Activated T-helper 2 cell treated with anti-CD3 and anti-CD28 coated beads, Interferon-gamma antibody, Interleukin-2, Interleukin-4, amounts not matched to agents 10 μg/mL and 5 μg/mL and 100 μg/mL, durations not matched to agents 14 hours and 24 hours and 36 hours (primary cell): ENCODE measurements at regions of chr14 and their contacts with region 1.

Region 1: GRCh38 chr14:67695394-67695949 is at the start of gene RDH11:
- DNase-seq: peak; percentile 81
- H3K4me3 Mint-ChIP-seq: peak within 1 kb of the TSS; percentile 95
- H3K27ac Mint-ChIP-seq: peak within 1 kb of the TSS; percentile 97
- H3K4me1 Mint-ChIP-seq: peaks cover 35% of the 10 kb centered on the region
- H3K27me3 Mint-ChIP-seq: no peaks in the 10 kb centered on the region
- total RNA-seq, gene RDH11: 78.4 and 82.9 TPM in 2 replicates

Region 2: GRCh38 chr14:67331368-67332125 is 363.9 kb before region 1 on chr14:
- intact Hi-C with region 1: no loop called
- DNase-seq: no peak
- H3K4me3 Mint-ChIP-seq: no peak overlapping the region
- H3K27ac Mint-ChIP-seq: no peak overlapping the region
- H3K4me1 Mint-ChIP-seq: no peaks in the 10 kb centered on the region
- H3K27me3 Mint-ChIP-seq: no peaks in the 10 kb centered on the region

Region 3: GRCh38 chr14:67619446-67620216 is 75.8 kb before region 1 on chr14 and contains the start of gene ARG2:
- intact Hi-C with region 1: loop called (anchors 2 kb)
- DNase-seq: peak; percentile 94
- H3K4me3 Mint-ChIP-seq: peak within 1 kb of the TSS; percentile 83
- H3K27ac Mint-ChIP-seq: peak within 1 kb of the TSS; percentile 79
- H3K4me1 Mint-ChIP-seq: peaks cover 38% of the 10 kb centered on the region
- H3K27me3 Mint-ChIP-seq: peaks cover 12% of the 10 kb centered on the region
- total RNA-seq, gene ARG2: 19.2 and 21.1 TPM in 2 replicates

Region 4: DNA sequence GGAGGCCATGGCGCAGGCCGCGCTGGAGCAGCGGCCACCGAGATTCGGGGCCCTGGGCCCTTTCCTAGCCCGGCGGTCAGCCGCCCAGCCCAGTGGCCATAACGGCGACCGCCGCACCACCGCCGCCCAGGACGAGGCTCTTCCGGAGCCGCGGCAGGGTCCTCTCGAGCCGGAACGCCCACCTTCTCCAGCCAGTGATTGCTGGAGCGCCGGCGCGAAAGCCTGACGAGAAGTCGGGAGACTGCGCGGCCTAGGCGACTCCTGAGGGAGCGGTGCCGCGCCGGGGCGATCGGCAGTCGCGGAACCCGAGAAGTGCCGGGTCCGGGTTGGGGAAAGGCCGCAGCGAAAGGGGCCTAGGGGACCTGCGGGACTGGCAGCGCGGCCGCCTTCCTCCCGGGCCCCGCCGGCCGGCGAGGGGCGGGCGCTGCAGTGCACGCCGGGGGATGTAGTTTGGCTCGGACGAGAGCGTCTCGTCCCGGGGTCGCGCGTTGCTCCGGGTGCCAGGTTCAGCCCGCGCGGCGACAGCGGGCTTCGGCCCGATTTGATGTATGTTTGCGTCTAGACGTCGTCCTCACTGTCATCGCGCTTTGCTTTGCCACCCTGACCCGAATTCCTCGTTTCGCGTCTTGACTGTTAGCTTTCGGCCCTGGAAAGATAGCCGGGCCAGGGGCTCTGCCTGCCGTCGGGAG is 20.8 kb before region 1 on chr14 and contains the start of gene VTI1B:
- intact Hi-C with region 1: loop called (anchors 1 kb)
- DNase-seq: peak; percentile 70
- H3K4me3 Mint-ChIP-seq: peak within 1 kb of the TSS; percentile 86
- H3K27ac Mint-ChIP-seq: peak within 1 kb of the TSS; percentile 86
- H3K4me1 Mint-ChIP-seq: peaks cover 22% of the 10 kb centered on the region
- H3K27me3 Mint-ChIP-seq: no peaks in the 10 kb centered on the region
- total RNA-seq, gene VTI1B: 73.7 and 75.4 TPM in 2 replicates

Region 5: GRCh38 chr14:67680121-67680602 is 15.3 kb before region 1 on chr14:
- intact Hi-C with region 1: loop called (anchors 1 kb)
- DNase-seq: peak; percentile 34
- H3K4me3 Mint-ChIP-seq: peak overlapping the region; percentile 7
- H3K27ac Mint-ChIP-seq: peak overlapping the region; percentile 83
- H3K4me1 Mint-ChIP-seq: peaks cover 45% of the 10 kb centered on the region
- H3K27me3 Mint-ChIP-seq: no peaks in the 10 kb centered on the region

Region 6: DNA sequence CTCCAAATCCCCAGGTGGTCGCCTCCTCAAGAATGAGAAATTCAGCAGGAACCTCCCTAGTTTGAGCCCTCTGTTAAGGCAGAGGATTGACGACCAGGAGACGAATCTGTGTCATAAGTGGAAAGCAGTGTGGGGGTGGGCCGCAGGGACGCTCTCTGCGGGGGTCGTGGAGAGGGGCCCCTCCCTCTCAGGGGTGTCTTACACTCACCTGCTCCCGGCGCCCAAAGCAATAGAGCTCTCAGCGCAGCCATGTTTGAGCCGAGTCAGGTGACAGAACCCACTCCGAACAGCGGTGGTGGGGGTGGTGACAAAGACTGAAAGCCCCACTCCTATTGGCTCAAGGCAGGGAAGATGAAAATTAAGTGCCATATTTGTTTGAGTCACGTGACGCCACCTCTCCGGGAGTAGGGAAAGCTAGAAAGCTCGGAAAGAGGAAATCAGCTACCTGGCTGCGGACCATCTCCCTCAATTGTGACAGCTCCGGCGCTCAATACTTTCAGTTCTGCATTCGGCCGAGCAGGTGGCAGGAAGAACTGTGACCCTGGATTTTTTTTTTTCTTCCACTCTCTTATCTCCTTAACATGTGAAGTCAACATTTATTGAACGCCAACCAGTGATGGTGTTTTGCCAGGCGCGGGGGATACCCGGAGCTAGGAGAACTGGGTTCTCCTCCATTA is 121.0 kb after region 1 on chr14 and contains the start of gene ZFYVE26:
- intact Hi-C with region 1: loop called (anchors 5 kb)
- DNase-seq: peak; percentile 89
- H3K4me3 Mint-ChIP-seq: peak within 1 kb of the TSS; percentile 87
- H3K27ac Mint-ChIP-seq: peak within 1 kb of the TSS; percentile 94
- H3K4me1 Mint-ChIP-seq: peaks cover 38% of the 10 kb centered on the region
- H3K27me3 Mint-ChIP-seq: no peaks in the 10 kb centered on the region
- total RNA-seq, gene ZFYVE26: 16.0 and 16.2 TPM in 2 replicates

Region 7: DNA sequence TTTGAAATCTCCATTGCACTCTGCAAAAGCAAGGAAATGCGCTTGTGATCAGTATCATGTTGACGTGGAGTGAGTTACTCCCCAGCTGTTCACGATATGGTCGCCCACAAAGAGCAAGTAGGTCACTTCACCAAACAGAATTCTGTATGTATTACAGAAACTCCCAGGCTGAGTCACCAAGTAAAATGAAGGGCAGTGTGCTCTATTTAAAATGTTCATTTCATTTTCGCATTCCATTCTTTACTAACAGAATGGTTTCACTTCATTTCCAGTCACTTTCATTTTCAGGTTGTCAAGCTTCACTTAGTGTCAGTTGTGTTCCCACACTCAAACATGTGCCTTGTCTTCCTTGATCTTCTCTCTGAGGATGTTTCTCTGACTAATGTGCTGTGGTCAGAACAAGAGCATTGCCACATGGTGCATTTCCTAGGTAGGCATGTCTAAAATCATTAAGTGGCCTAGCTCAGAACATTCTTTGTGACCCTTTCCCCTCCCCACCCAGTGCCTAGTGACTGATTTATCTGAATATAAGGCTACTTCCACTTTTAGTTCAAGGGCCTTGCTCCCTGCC is 515.3 kb after region 1 on chr14:
- intact Hi-C with region 1: loop called (anchors 10 kb)
- DNase-seq: peak; percentile 54
- H3K4me3 Mint-ChIP-seq: peak overlapping the region; percentile 61
- H3K27ac Mint-ChIP-seq: peak overlapping the region; percentile 62
- H3K4me1 Mint-ChIP-seq: peaks cover 36% of the 10 kb centered on the region
- H3K27me3 Mint-ChIP-seq: no peaks in the 10 kb centered on the region